Right ventricle myocardium inferior (tissue), 1 donor: ENCODE measurements at regions of chr1 and their contacts with region 1.

Region 1: GRCh38 chr1:52002038-52002917 is 11.8 kb upstream of the RAB3B start:
- DNase-seq: no peak
- ATAC-seq: peak; percentile 73

Region 2: GRCh38 chr1:51897699-51898031 is 104.6 kb before region 1 on chr1:
- intact Hi-C with region 1: loop called (anchors 1 kb)
- DNase-seq: no peak
- ATAC-seq: no peak

Region 3: GRCh38 chr1:51990478-51990965 is 11.8 kb before region 1 on chr1 and contains the start of gene RAB3B:
- intact Hi-C with region 1: no loop called
- DNase-seq: no peak
- ATAC-seq: peak; percentile 59
- total RNA-seq, gene RAB3B: not detected